Posterior cingulate gyrus (tissue), 11 donors: ENCODE measurements at regions of chr2 and their contacts with region 1.

Region 1: GRCh38 chr2:226984750-226985582 is 149.1 kb downstream of the RHBDD1 start:
- DNase-seq: peak in 3 of 10 donors; percentile 17 to 48 (median 45)

Region 2: GRCh38 chr2:225668606-225669266 is 1316.2 kb before region 1 on chr2:
- intact Hi-C with region 1: loop called (anchors 2 kb)
- DNase-seq: no peak

Region 3: DNA sequence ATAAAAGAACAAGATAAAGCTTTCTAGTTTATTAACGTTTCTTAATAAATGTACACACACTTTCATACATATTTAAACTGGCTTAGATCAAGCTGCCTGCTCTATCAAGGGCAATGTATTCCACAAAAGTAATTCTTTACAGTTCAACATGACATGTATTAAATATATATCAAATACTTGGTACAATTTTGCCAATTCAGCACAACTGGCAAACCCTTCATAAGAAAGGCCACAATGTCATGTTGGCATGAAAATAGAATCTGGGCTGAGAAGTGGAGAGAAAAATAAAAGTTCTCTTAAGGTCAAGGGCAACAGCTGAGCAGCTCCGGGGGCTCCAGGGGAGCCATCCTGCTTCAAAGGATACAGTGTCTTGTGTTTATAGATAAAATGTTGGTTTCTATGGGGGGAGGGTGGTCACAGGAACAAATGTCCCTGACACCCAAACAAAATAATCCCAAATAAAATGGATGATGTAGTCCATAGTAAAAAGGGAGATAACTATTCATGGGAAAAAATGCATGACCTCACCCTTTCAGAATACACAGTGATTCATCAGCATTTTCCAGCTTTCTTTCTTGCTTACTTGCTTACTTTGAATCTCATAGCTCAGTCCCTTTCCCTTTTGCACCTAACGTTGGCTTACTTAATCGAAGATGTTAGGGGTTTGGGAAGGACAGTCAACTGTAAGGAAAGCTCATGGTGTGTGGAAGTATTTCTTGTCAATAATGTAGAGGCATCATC is 1090.6 kb before region 1 on chr2:
- intact Hi-C with region 1: loop called (anchors 5 kb)
- DNase-seq: no peak

Region 4: DNA sequence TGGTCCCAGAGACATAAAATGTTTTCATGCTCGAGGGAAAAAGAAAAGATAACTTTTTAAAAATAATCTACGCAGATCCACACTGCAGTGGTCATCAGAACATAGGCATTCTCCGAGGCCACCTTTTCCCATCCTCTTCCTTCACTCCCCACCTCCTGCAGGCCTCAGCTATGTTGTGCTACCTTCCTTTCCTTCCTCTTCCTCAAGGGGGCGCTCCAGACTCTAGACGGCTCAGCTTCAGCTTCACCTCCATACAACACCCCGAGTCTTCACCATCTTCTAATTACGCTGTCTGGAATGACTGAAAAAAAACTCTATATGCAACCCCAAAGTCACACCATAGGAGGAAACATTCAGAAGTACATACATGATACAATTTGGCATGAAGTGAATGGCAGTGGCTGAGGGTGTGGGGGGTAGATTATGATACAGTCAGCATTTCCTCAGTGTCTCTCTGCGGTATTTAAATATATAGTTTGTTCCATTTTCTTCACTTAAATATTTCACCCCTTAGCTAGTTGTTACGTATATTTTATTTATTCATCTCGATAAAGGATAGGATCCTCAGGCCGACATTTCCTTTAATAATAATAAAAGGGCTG is 769.0 kb before region 1 on chr2:
- intact Hi-C with region 1: loop called (anchors 10 kb)
- DNase-seq: peak in 6 of 10 donors; percentile 7 to 86 (median 42)

Region 5: GRCh38 chr2:226813148-226813701 is 171.7 kb before region 1 on chr2:
- intact Hi-C with region 1: loop called (anchors 1 kb)
- DNase-seq: peak in 3 of 10 donors; percentile 26 to 54 (median 41)

Region 6: GRCh38 chr2:227016894-227017293 is 31.9 kb after region 1 on chr2:
- intact Hi-C with region 1: no loop called
- DNase-seq: no peak

Region 7: GRCh38 chr2:227388537-227389011 is 403.6 kb after region 1 on chr2:
- intact Hi-C with region 1: no loop called
- DNase-seq: no peak